Naive thymus-derived CD4-positive, alpha-beta T cell (primary cell): ENCODE measurements at regions of chr21 and their contacts with region 1.

Region 1: DNA sequence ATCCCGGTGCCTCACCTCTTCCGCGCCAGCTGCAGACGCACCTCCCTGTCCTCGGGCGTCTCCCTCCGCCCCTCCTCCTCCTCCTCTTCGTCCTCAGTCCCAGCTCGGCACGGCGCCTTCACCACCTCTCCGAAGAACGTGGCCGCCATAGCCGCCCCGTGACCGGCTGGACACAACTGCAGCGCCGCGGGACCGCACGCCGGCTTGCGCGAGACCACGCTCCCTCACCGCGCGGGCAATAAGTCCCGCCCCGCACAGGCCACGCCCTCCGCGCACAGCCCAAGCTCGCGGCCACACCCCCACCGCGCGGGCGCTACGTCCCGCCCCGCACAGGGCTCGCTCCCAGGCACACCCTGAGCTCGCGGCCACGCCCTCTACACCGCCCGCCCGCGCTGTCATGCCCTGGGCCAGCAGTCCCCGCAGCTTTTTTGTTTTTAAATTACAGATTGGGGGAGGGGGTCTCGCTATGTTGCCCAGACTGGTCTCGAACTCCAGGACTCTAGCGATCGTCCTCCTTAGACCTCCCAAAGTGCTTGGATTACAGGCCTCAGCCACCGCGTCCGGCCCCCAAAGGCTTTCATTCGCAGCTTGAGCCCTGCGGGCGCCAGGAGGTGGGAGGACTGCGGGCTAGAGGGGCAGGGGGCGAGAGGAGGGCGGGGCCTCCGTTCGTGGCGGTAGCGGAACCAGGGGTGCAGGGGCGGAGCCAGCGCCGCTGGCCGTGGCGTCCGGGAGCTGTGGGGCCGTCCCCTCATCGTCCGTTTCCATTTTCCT is at the start of gene PSMG1:
- DNase-seq: peak; percentile 89 to 96 (median 94)
- ATAC-seq: peak; percentile 99
- H3K4me3 ChIP-seq: peak within 1 kb of the TSS; percentile 86
- H3K4me3 Mint-ChIP-seq: peak within 1 kb of the TSS; percentile 92 to 100 (median 97)
- H3K27ac ChIP-seq: peak within 1 kb of the TSS; percentile 93
- H3K27ac Mint-ChIP-seq: peak within 1 kb of the TSS; percentile 88 to 98 (median 95)
- H3K4me1 ChIP-seq: peaks cover 9% of the 10 kb centered on the region in 2 donors
- H3K4me1 Mint-ChIP-seq: peaks cover 28 to 78% (median 52%) of the 10 kb centered on the region in 7 donors
- H3K27me3 ChIP-seq: no peaks in the 10 kb centered on the region
- H3K27me3 Mint-ChIP-seq: no peaks in the 10 kb centered on the region
- total RNA-seq, gene PSMG1: 9.8 to 62.5 (median 16.9) TPM

Region 2: DNA sequence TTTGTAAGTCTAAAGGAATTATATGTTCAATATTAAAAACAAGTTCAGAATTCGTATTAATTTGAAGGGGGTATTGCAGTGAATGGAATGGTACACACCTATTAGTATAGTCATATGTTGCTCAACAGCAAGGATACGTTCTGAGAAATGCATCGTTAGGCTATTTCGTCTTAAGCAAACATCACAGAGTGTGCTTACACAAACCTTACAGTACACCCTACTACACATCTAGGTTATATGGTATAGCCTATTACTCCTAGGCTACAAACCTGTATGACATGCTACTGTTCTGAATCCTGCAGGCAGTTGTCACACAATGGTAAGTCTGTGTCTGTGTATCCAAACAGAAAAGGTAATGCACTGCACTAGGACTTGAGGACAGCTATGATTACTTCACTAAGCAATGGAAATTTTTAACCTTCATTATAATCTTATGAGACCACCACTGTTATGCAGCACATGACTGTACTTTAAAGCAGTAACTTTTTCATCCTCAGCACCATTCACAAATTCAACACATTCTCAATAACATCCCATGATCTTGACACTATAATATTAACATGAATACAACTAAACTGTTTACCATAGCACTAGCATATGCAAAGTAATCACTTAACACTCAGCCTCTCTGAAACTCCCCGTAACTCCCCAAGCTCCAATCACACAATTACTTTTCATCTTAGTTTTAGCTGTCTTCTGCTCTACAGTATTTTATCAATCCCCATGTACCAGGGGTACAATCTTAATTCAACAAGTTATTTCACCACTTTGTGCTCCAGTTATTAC is 14.2 kb after region 1 on chr21:
- CTCF ChIA-PET with region 1: no interaction called
- POLR2A ChIA-PET with region 1: interaction called, 3 read pairs
- intact Hi-C with region 1: loop called in 1 of 2 experiments (anchors 2 kb)
- DNase-seq: no peak
- ATAC-seq: no peak
- H3K4me3 ChIP-seq: no peak overlapping the region
- H3K4me3 Mint-ChIP-seq: no peak overlapping the region
- H3K27ac ChIP-seq: no peak overlapping the region
- H3K27ac Mint-ChIP-seq: peak overlapping the region in 5 of 9 donors; percentile 9 to 69 (median 61)
- H3K4me1 ChIP-seq: peaks cover 0 to 7% of the 10 kb centered on the region in 2 donors
- H3K4me1 Mint-ChIP-seq: peaks cover 13 to 40% (median 31%) of the 10 kb centered on the region in 7 donors
- H3K27me3 ChIP-seq: no peaks in the 10 kb centered on the region
- H3K27me3 Mint-ChIP-seq: no peaks in the 10 kb centered on the region

Region 3: DNA sequence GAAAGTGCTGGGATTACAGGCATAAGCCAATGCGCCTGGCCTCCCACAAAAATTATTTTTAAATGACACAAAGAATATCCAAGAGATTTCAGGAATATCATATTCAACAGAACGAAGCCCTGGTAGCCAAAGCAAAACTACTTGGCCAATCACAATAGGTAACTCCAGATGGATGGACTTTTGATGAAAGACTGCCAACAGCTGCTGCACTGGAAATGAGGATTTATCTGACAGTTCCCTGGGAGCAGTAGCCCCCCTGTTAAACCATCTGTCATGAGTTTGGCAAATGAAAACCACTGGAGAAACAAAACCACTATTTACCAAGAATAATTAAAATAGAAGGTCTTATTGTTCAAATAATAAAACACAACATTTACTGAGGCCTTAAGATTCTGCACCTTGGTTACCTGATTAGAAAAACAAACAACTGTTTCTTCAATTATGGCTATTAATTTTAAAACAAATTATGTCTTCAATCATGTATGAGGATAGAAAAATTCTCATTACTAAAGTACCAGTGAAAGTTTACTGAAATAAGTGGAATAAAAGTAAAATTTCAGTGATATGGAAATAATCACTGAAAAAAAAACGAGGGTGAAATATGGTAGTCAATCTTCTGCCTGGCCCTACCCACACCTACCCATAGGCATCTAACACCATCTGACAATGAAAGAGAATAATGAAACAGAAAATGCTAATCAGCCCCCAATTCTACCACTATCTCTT is 34.1 kb after region 1 on chr21:
- CTCF ChIA-PET with region 1: no interaction called
- POLR2A ChIA-PET with region 1: no interaction called
- intact Hi-C with region 1: loop called in 1 of 2 experiments (anchors 5 kb)
- DNase-seq: no peak
- ATAC-seq: no peak
- H3K4me3 ChIP-seq: no peak overlapping the region
- H3K4me3 Mint-ChIP-seq: no peak overlapping the region
- H3K27ac ChIP-seq: no peak overlapping the region
- H3K27ac Mint-ChIP-seq: peak overlapping the region in 2 of 9 donors; percentile 45 to 59
- H3K4me1 ChIP-seq: no peaks in the 10 kb centered on the region
- H3K4me1 Mint-ChIP-seq: peaks cover 0 to 36% (median 19%) of the 10 kb centered on the region in 7 donors
- H3K27me3 ChIP-seq: no peaks in the 10 kb centered on the region
- H3K27me3 Mint-ChIP-seq: no peaks in the 10 kb centered on the region

Region 4: GRCh38 chr21:39349211-39350093 is 166.0 kb after region 1 on chr21:
- CTCF ChIA-PET with region 1: no interaction called
- POLR2A ChIA-PET with region 1: interaction called, 6 read pairs
- intact Hi-C with region 1: loop called (anchors 1 kb)
- DNase-seq: peak; percentile 91 to 98 (median 97)
- ATAC-seq: peak; percentile 91
- H3K4me3 ChIP-seq: peak overlapping the region; percentile 79
- H3K4me3 Mint-ChIP-seq: peak overlapping the region; percentile 88 to 99 (median 96)
- H3K27ac ChIP-seq: peak overlapping the region; percentile 87
- H3K27ac Mint-ChIP-seq: peak overlapping the region; percentile 94 to 100 (median 99)
- H3K4me1 ChIP-seq: peaks cover 20 to 25% of the 10 kb centered on the region in 2 donors
- H3K4me1 Mint-ChIP-seq: peaks cover 30 to 49% (median 37%) of the 10 kb centered on the region in 7 donors
- H3K27me3 ChIP-seq: no peaks in the 10 kb centered on the region
- H3K27me3 Mint-ChIP-seq: peaks cover 0 to 16% (median 0%) of the 10 kb centered on the region in 5 donors

Region 5: GRCh38 chr21:39388038-39388810 is 204.8 kb after region 1 on chr21:
- CTCF ChIA-PET with region 1: interaction called, 3 read pairs
- POLR2A ChIA-PET with region 1: interaction called, 7 read pairs
- intact Hi-C with region 1: loop called (anchors 1 to 2 kb)
- DNase-seq: peak; percentile 71 to 93 (median 83)
- ATAC-seq: peak; percentile 87
- H3K4me3 ChIP-seq: peak overlapping the region; percentile 51
- H3K4me3 Mint-ChIP-seq: peak overlapping the region; percentile 83 to 91 (median 90)
- H3K27ac ChIP-seq: peak overlapping the region; percentile 67
- H3K27ac Mint-ChIP-seq: peak overlapping the region; percentile 71 to 94 (median 90)
- H3K4me1 ChIP-seq: peaks cover 11 to 15% of the 10 kb centered on the region in 2 donors
- H3K4me1 Mint-ChIP-seq: peaks cover 18 to 38% (median 31%) of the 10 kb centered on the region in 7 donors
- H3K27me3 ChIP-seq: no peaks in the 10 kb centered on the region
- H3K27me3 Mint-ChIP-seq: no peaks in the 10 kb centered on the region